ENCODE measurements at regions of chr15 and their contacts with region 1.

Region 1: GRCh38 chr15:35444557-35445204 is 101.3 kb downstream of the DPH6 start:
- DNase-seq: peak in 1 of 3 donors; percentile 19
- ATAC-seq: peak; percentile 70
- H3K4me3 ChIP-seq: no peak overlapping the region
- H3K4me1 ChIP-seq: no peaks in the 10 kb centered on the region
- CTCF ChIP-seq: peak; percentile 45

Region 2: DNA sequence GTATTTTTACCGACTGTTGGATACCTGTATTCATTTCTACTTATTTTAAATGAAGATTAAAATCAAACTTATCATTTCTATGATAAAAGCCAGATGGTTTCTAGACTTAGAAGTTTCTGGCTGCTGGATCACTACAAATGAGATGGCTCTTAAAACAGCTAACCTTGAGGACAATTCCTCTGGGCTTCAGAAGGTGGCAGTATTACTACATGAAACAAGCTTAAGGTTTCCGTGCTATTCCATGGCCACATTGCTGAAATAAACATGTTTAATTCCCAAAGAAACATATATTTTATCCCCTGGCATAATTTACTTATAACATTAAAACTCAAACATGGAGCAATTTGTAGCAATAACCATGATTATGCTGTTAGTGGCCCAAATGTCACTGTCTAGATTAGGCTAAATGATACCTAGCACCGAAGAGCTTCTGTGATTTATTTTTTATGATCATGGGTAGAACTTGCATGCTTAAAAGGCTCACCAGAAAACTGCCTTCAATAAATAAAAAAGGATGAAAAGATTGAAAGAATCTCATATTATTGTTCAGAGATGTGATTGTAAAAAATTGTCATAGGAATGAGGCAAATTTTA is 155.6 kb before region 1 on chr15:
- intact Hi-C with region 1: loop called (anchors 2 to 10 kb)
- DNase-seq: peak in 1 of 3 donors; percentile 48
- ATAC-seq: peak; percentile 73
- H3K4me3 ChIP-seq: no peak overlapping the region
- H3K4me1 ChIP-seq: peaks cover 7% of the 10 kb centered on the region
- CTCF ChIP-seq: peak; percentile 41

Region 3: DNA sequence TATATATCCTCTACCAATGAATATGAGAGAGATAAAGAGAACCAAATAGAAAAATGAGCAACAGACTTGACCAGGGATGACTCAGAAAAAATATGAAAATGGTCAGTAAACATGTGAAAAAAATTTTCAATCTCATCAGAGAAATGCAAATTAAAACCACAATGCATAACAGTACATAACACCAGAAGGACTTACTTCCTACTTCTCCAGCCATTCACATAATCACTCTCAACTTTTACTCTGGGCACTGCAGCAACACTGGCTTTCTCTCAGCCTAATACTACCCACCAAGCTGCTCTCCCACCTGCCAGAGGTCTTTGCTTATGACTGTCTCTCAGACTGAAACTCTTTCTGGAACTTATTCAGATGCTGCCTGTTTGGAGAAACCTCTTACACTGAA is 51.9 kb after region 1 on chr15:
- intact Hi-C with region 1: no loop called
- DNase-seq: no peak
- ATAC-seq: no peak
- H3K4me3 ChIP-seq: no peak overlapping the region
- H3K4me1 ChIP-seq: peaks cover 9% of the 10 kb centered on the region
- CTCF ChIP-seq: no peak

Region 4: DNA sequence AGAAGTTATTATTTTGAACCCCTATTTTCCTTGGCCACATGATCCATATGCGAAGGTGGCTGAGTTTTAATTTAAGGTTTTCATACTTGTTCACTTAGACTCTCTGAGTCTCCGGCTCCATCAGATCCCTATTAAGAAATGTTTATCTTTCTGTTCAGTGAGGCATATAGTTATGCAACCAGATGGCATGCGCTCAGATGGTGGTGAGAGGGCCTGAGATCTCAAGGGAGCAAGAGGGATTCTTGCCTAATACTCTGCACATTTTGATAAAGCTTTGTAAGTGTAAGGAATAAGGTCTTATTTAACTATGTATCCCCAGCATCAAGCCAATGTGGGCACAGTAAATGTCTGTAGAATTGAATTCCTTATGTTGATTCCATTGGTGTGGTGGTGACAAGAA is 180.2 kb after region 1 on chr15:
- intact Hi-C with region 1: no loop called
- DNase-seq: peak in 1 of 3 donors; percentile 7
- ATAC-seq: peak; percentile 12
- H3K4me3 ChIP-seq: no peak overlapping the region
- H3K4me1 ChIP-seq: no peaks in the 10 kb centered on the region
- CTCF ChIP-seq: no peak

Region 5: GRCh38 chr15:35657679-35658311 is 213.1 kb after region 1 on chr15:
- intact Hi-C with region 1: no loop called
- DNase-seq: no peak
- ATAC-seq: no peak
- H3K4me3 ChIP-seq: no peak overlapping the region
- H3K4me1 ChIP-seq: no peaks in the 10 kb centered on the region
- CTCF ChIP-seq: no peak

Measured in mucosa of descending colon (tissue), 3 donors.